Caco-2 (cell line): ENCODE measurements at regions of chr17 and their contacts with region 1.

Region 1: GRCh38 chr17:54172096-54172984 is 349.6 kb downstream of the KIF2B start:
- DNase-seq: peak; percentile 29 to 34
- H3K4me3 ChIP-seq: no peak overlapping the region
- H3K4me3 Mint-ChIP-seq: no peak overlapping the region
- H3K27ac Mint-ChIP-seq: no peak overlapping the region
- H3K4me1 ChIP-seq: peaks cover 6% of the 10 kb centered on the region; the same call in 1 of the 2 replicates
- H3K4me1 Mint-ChIP-seq: no peaks in the 10 kb centered on the region
- H3K27me3 ChIP-seq: no peaks in the 10 kb centered on the region
- H3K27me3 Mint-ChIP-seq: no peaks in the 10 kb centered on the region
- CTCF ChIP-seq: peak; percentile 58 to 73

Region 2: GRCh38 chr17:53032861-53033271 is 1139.5 kb before region 1 on chr17:
- CTCF ChIA-PET with region 1: no interaction called
- POLR2A ChIA-PET with region 1: no interaction called
- intact Hi-C with region 1: loop called (anchors 1 kb)
- DNase-seq: peak; percentile 75 to 80
- H3K4me3 ChIP-seq: no peak overlapping the region
- H3K4me3 Mint-ChIP-seq: no peak overlapping the region
- H3K27ac Mint-ChIP-seq: no peak overlapping the region
- H3K4me1 ChIP-seq: peaks cover 5% of the 10 kb centered on the region; the same call in 1 of the 2 replicates
- H3K4me1 Mint-ChIP-seq: peaks cover 8% of the 10 kb centered on the region
- H3K27me3 ChIP-seq: no peaks in the 10 kb centered on the region
- H3K27me3 Mint-ChIP-seq: no peaks in the 10 kb centered on the region
- CTCF ChIP-seq: peak; percentile 75 to 82

Region 3: GRCh38 chr17:53792997-53793396 is 379.3 kb before region 1 on chr17:
- CTCF ChIA-PET with region 1: no interaction called
- POLR2A ChIA-PET with region 1: no interaction called
- intact Hi-C with region 1: loop called (anchors 2 kb)
- DNase-seq: no peak
- H3K4me3 ChIP-seq: no peak overlapping the region
- H3K4me3 Mint-ChIP-seq: no peak overlapping the region
- H3K27ac Mint-ChIP-seq: no peak overlapping the region
- H3K4me1 ChIP-seq: no peaks in the 10 kb centered on the region
- H3K4me1 Mint-ChIP-seq: no peaks in the 10 kb centered on the region
- H3K27me3 ChIP-seq: no peaks in the 10 kb centered on the region
- H3K27me3 Mint-ChIP-seq: peaks cover 2% of the 10 kb centered on the region
- CTCF ChIP-seq: no peak

Region 4: GRCh38 chr17:54426296-54426886 is 254.1 kb after region 1 on chr17:
- CTCF ChIA-PET with region 1: no interaction called
- POLR2A ChIA-PET with region 1: no interaction called
- intact Hi-C with region 1: loop called (anchors 2 kb)
- DNase-seq: peak in 1 of 2 experiments; percentile 14
- H3K4me3 ChIP-seq: no peak overlapping the region
- H3K4me3 Mint-ChIP-seq: no peak overlapping the region
- H3K27ac Mint-ChIP-seq: no peak overlapping the region
- H3K4me1 ChIP-seq: no peaks in the 10 kb centered on the region
- H3K4me1 Mint-ChIP-seq: no peaks in the 10 kb centered on the region
- H3K27me3 ChIP-seq: no peaks in the 10 kb centered on the region
- H3K27me3 Mint-ChIP-seq: no peaks in the 10 kb centered on the region
- CTCF ChIP-seq: peak; percentile 28 to 54